Left colon (tissue), 2 donors: ENCODE measurements at regions of chr11 and their contacts with region 1.

Region 1: DNA sequence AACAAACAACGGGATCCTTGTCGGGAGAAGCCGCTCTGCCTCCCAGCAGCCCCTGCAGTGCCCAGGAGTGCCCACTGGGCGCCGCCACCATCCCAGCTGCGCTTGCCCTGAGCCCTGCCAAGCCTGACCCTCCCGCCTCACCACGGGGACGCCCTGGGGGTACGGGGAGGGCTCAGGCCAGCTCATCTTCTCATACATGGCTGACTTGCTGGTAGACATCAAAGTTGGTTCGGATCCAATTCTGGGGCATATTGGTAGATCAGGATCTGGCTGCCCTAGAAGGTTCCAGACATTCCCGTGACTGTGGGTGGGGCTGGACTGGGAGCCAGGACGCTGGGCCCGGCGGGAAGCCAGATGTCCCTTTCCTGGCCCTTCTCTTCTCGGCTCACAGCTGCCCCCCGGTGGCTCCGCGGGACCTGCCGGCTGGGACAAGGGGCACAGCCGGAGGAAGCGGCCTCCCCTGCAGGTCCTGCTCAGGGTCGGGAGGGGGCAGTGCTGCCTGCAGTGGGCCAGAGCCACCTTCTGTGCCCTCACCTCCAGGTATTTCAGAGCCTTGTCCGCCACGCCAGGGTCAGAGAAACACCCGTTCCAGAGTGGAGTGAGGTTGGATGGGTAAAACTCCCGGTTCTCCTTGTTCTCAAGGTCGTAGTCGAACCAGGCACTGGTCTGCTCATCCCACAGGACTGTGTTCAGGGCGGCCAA is 10.6 kb upstream of the TREH start:
- DNase-seq: peak; percentile 69 to 98
- ATAC-seq: peak; percentile 93

Region 2: GRCh38 chr11:118870396-118871345 is 180.7 kb after region 1 on chr11:
- intact Hi-C with region 1: no loop called
- DNase-seq: no peak
- ATAC-seq: peak; percentile 31

Region 3: DNA sequence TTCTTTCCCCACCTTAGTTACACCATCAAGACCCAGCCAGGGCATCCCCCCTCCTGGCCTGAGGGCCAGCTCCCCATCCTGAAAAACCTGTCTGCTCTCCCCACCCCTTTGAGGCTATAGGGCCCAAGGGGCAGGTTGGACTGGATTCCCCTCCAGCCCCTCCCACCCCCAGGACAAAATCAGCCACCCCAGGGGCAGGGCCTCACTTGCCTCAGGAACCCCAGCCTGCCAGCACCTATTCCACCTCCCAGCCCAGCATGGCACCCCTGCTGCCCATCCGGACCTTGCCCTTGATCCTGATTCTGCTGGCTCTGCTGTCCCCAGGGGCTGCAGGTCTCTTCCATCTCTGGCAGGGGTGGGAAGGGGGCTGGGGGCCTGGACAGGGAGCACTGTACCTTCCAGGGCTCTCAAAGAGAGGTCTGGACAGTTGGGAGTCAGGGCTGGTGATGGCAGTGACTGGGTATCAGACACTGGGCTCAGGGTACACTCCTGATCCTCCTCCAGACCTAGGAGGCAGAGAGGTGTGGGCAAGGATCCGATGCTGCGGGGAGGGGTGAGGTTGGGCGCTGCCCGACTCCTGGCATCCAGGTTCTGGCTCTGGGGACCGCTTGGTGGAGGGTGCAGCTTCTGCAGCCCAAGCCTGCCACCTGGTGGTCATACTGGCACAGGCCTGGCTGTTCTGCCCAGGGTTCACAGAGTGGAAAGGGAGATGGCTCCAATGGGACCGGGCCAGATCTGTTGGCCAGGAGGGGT is 266.3 kb after region 1 on chr11 and contains the start of gene UPK2:
- intact Hi-C with region 1: loop called (anchors 5 to 10 kb)
- DNase-seq: peak; percentile 76 to 94
- ATAC-seq: peak; percentile 96
- total RNA-seq, gene UPK2: not detected